CD4-positive, alpha-beta memory T cell (primary cell): ENCODE measurements at regions of chr11 and their contacts with region 1.

Region 1: GRCh38 chr11:126211235-126212088 is at the starts of genes FAM118B and RPUSD4:
- DNase-seq: peak; percentile 98
- H3K4me3 ChIP-seq: peak within 1 kb of the TSS; percentile 44 to 91
- H3K4me3 Mint-ChIP-seq: peak within 1 kb of the TSS; percentile 99 to 100 (median 99)
- H3K27ac ChIP-seq: peak within 1 kb of the TSS; percentile 67
- H3K27ac Mint-ChIP-seq: peak within 1 kb of the TSS; percentile 91 to 99 (median 98)
- H3K4me1 ChIP-seq: peaks cover 24% of the 10 kb centered on the region
- H3K4me1 Mint-ChIP-seq: peaks cover 27 to 43% (median 32%) of the 10 kb centered on the region in 4 donors
- H3K27me3 ChIP-seq: no peaks in the 10 kb centered on the region
- H3K27me3 Mint-ChIP-seq: no peaks in the 10 kb centered on the region
- total RNA-seq, gene FAM118B: 12.6 to 13.2 TPM
- total RNA-seq, gene RPUSD4: 39.3 to 41.2 TPM

Region 2: DNA sequence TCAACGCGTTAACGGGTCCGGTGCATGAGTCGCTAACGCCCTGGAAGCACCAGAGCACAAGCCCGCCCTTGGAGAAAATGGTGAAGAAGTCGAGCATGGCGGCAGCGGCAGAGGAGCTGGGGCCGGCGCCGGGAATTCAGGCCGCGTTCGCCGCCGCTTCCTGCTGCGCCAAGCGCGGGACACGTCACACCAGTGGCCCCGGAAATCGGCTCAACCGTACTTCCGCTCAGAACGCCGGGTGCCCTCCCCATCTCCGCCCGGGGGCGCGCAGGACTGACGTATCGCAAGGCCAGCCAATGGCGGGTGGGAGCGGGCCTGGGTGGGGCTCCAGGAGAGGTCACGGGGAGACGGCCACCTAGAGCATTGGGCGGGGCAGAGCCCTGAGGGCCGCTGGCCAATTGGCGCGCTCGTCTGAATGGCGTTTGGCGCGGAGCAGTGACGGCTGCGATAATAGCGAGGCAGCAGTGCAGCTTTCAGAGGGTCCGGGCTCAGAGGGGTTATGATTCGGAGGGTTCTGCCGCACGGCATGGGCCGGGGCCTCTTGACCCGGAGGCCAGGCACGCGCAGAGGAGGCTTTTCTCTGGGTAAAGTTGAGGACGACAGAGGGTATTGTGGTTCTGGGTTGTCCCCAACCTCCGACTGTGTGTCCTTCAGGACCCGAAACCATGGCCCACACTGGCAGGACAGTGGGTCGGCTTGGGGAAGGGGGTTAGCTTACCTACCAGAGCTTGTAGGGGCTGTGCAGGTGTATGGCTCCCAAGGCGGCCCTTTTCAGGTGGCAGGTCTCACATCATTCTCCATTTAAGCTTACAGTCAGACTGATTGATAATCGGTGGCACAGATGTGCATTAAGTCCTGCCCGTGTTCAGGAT is 57.5 kb after region 1 on chr11 and contains the starts of genes FOXRED1 and SRPRA:
- CTCF ChIA-PET with region 1: no interaction called
- POLR2A ChIA-PET with region 1: interaction called, 23 read pairs
- intact Hi-C with region 1: loop called (anchors 1 kb)
- DNase-seq: peak; percentile 100
- H3K4me3 ChIP-seq: peak within 1 kb of the TSS; percentile 84 to 96
- H3K4me3 Mint-ChIP-seq: peak within 1 kb of the TSS; percentile 95 to 99 (median 96)
- H3K27ac ChIP-seq: peak within 1 kb of the TSS; percentile 83
- H3K27ac Mint-ChIP-seq: peak within 1 kb of the TSS; percentile 94 to 99 (median 99)
- H3K4me1 ChIP-seq: peaks cover 26% of the 10 kb centered on the region
- H3K4me1 Mint-ChIP-seq: peaks cover 19 to 43% (median 24%) of the 10 kb centered on the region in 4 donors
- H3K27me3 ChIP-seq: no peaks in the 10 kb centered on the region
- H3K27me3 Mint-ChIP-seq: no peaks in the 10 kb centered on the region
- total RNA-seq, gene FOXRED1: 30.5 to 32.5 TPM
- total RNA-seq, gene SRPRA: 171 to 176 TPM